ENCODE measurements at regions of chr19 and their contacts with region 1.

Region 1: DNA sequence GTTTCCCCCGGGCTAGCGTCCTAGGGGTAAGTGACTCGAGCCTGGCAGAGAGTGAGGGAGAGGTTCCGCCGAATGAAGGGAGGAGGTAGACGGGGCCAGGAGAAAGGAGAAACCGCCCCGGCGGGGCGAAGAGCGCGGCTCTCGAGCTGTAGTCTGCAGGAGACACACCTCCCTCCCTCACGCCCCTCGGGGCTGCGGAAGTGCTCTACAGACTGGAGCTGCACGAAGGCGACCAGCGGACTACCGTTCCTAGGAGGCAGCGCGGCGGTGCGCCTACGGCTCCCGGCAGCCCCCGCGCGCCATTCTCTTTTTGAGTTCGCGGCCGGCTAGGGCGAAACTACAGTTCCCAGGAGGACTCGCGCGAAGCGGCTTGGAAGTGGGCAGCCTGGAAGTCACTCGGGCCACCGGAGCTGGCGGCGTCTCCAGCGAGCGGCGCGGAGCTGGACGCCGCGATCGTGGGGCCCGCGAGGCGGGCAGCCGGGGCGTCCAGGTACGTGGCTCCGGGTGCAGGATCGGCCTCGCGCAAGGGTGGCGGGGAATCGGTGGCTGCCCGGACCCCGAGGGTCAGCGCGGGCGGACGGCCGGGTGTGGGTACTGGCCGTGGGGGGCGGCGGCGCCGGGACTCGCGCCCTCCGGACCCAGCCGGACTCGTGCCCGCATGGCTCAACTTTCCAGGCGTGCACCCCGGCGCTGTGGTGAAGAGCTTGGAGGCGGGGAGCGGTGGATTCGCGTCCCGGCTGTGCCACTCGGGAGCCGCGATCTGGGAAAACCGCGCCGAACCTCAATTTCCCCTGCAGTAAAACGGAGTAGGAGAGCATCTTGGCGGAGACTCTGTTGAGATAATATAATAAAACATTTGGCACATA is at the start of gene SIPA1L3:
- DNase-seq: peak; percentile 98
- H3K4me3 ChIP-seq: peak within 1 kb of the TSS; percentile 96
- H3K27ac ChIP-seq: peak within 1 kb of the TSS; percentile 85
- H3K4me1 ChIP-seq: peaks cover 64% of the 10 kb centered on the region
- CTCF ChIP-seq: no peak
- total RNA-seq, gene SIPA1L3: 21.2 and 36.3 TPM in 2 replicates

Region 2: GRCh38 chr19:37931881-37932655 is 25.0 kb after region 1 on chr19:
- CTCF ChIA-PET with region 1: interaction called, 7 read pairs
- POLR2A ChIA-PET with region 1: interaction called, 15 read pairs
- intact Hi-C with region 1: no loop called
- DNase-seq: peak; percentile 60
- H3K4me3 ChIP-seq: peak overlapping the region; percentile 65
- H3K27ac ChIP-seq: peak overlapping the region; percentile 61
- H3K4me1 ChIP-seq: peaks cover 68% of the 10 kb centered on the region
- CTCF ChIP-seq: peak; percentile 31; the same call in 1 of the 2 replicates

Region 3: GRCh38 chr19:37943480-37943879 is 36.4 kb after region 1 on chr19:
- CTCF ChIA-PET with region 1: no interaction called
- POLR2A ChIA-PET with region 1: no interaction called
- intact Hi-C with region 1: no loop called
- DNase-seq: no peak
- H3K4me3 ChIP-seq: no peak overlapping the region
- H3K27ac ChIP-seq: no peak overlapping the region
- H3K4me1 ChIP-seq: no peaks in the 10 kb centered on the region
- CTCF ChIP-seq: no peak

Region 4: GRCh38 chr19:37987356-37988332 is 80.5 kb after region 1 on chr19:
- CTCF ChIA-PET with region 1: interaction called, 5 read pairs
- POLR2A ChIA-PET with region 1: interaction called, 10 read pairs
- intact Hi-C with region 1: no loop called
- DNase-seq: peak; percentile 64
- H3K4me3 ChIP-seq: no peak overlapping the region
- H3K27ac ChIP-seq: peak overlapping the region; percentile 88
- H3K4me1 ChIP-seq: peaks cover 53% of the 10 kb centered on the region
- CTCF ChIP-seq: peak; percentile 92

Region 5: GRCh38 chr19:38049105-38049649 is 142.1 kb after region 1 on chr19:
- CTCF ChIA-PET with region 1: interaction called, 3 read pairs
- POLR2A ChIA-PET with region 1: interaction called, 5 read pairs
- intact Hi-C with region 1: loop called (anchors 1 kb)
- DNase-seq: peak; percentile 79
- H3K4me3 ChIP-seq: peak overlapping the region; percentile 53
- H3K27ac ChIP-seq: peak overlapping the region; percentile 100
- H3K4me1 ChIP-seq: peaks cover 72% of the 10 kb centered on the region
- CTCF ChIP-seq: no peak

Region 6: GRCh38 chr19:38142176-38143035 is 235.3 kb after region 1 on chr19:
- CTCF ChIA-PET with region 1: no interaction called
- POLR2A ChIA-PET with region 1: no interaction called
- intact Hi-C with region 1: loop called (anchors 10 kb)
- DNase-seq: peak; percentile 63
- H3K4me3 ChIP-seq: no peak overlapping the region
- H3K27ac ChIP-seq: no peak overlapping the region
- H3K4me1 ChIP-seq: no peaks in the 10 kb centered on the region
- CTCF ChIP-seq: peak; percentile 79